ENCODE measurements at regions of chr19 and their contacts with region 1.

Region 1: GRCh38 chr19:55407800-55408532 is 378 bp upstream of the UBE2S start:
- DNase-seq: peak; percentile 98
- ATAC-seq: peak; percentile 96
- H3K4me3 Mint-ChIP-seq: peak overlapping the region; percentile 90
- H3K27ac Mint-ChIP-seq: peak overlapping the region; percentile 96
- H3K4me1 Mint-ChIP-seq: peaks cover 22% of the 10 kb centered on the region
- H3K27me3 Mint-ChIP-seq: no peaks in the 10 kb centered on the region

Region 2: DNA sequence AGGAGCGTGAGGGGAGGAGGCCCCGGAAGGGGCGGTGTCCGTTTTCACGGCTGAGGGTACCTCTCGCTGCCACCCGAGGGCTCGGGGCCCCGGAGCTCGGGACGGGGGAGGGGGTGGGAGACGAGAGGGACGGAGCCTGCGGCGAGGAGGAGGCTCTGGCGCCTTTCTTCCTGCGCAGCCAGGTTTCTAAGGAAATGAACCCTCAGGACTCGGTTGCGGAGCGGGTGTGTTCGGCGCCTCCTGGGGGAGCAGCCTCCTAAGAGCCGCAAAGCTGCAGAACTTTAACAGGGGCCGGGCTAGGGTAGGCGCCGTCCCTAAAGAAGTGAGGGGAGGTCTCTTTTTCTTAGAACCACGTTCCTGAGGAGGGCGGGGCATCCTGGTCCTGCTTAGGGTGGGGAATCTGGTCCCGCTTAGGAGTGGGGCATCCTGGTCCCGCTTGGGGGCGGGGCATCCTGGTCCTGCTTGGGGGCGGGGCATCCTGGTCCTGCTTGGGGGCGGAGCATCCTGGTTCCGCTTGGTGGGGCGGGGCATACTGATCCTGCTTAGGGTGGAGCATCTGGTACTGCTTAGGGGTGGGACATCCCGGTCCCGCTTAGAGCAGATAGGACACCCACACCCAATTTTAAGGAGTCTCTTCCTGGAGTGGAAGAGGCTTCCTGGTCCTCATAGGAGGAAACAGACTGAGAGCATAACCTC is 234.1 kb before region 1 on chr19:
- CTCF ChIA-PET with region 1: no interaction called
- POLR2A ChIA-PET with region 1: no interaction called
- intact Hi-C with region 1: no loop called
- DNase-seq: peak; percentile 72
- ATAC-seq: peak; percentile 69
- H3K4me3 Mint-ChIP-seq: peak overlapping the region; percentile 49
- H3K27ac Mint-ChIP-seq: no peak overlapping the region
- H3K4me1 Mint-ChIP-seq: peaks cover 16% of the 10 kb centered on the region
- H3K27me3 Mint-ChIP-seq: peaks cover 61% of the 10 kb centered on the region

Region 3: DNA sequence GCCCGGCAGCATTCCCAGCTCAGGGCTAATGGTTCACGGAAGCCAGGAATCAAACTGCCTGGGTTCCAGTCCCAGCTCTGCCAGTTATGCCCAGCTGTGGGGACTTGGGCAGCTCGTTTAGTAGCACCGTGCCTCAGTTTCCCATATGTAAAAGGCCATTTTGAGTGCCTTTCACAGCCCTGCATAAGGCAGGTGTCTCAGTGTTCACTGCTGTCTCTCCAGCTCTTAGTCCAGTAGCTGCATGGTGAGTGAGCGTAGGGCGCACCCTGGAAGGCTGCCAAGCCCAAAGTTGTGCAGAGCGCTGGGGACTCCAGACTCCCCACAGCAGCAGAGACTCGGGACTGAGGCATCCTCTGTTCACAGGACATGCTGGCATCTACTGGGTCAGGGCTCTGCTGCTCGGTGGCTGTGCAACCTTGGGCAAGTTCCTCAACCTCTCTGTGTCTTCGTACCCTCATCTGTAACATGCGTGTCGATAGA is 16.7 kb before region 1 on chr19:
- CTCF ChIA-PET with region 1: interaction called, 3 read pairs
- POLR2A ChIA-PET with region 1: interaction called, 41 read pairs
- intact Hi-C with region 1: no loop called
- DNase-seq: no peak
- ATAC-seq: no peak
- H3K4me3 Mint-ChIP-seq: no peak overlapping the region
- H3K27ac Mint-ChIP-seq: no peak overlapping the region
- H3K4me1 Mint-ChIP-seq: peaks cover 31% of the 10 kb centered on the region
- H3K27me3 Mint-ChIP-seq: no peaks in the 10 kb centered on the region

Region 4: GRCh38 chr19:55452749-55453346 is 44.9 kb after region 1 on chr19:
- CTCF ChIA-PET with region 1: no interaction called
- POLR2A ChIA-PET with region 1: no interaction called
- intact Hi-C with region 1: loop called in 1 of 2 experiments (anchors 5 kb)
- DNase-seq: peak; percentile 61
- ATAC-seq: peak; percentile 63
- H3K4me3 Mint-ChIP-seq: no peak overlapping the region
- H3K27ac Mint-ChIP-seq: no peak overlapping the region
- H3K4me1 Mint-ChIP-seq: peaks cover 8% of the 10 kb centered on the region
- H3K27me3 Mint-ChIP-seq: peaks cover 20% of the 10 kb centered on the region

Region 5: DNA sequence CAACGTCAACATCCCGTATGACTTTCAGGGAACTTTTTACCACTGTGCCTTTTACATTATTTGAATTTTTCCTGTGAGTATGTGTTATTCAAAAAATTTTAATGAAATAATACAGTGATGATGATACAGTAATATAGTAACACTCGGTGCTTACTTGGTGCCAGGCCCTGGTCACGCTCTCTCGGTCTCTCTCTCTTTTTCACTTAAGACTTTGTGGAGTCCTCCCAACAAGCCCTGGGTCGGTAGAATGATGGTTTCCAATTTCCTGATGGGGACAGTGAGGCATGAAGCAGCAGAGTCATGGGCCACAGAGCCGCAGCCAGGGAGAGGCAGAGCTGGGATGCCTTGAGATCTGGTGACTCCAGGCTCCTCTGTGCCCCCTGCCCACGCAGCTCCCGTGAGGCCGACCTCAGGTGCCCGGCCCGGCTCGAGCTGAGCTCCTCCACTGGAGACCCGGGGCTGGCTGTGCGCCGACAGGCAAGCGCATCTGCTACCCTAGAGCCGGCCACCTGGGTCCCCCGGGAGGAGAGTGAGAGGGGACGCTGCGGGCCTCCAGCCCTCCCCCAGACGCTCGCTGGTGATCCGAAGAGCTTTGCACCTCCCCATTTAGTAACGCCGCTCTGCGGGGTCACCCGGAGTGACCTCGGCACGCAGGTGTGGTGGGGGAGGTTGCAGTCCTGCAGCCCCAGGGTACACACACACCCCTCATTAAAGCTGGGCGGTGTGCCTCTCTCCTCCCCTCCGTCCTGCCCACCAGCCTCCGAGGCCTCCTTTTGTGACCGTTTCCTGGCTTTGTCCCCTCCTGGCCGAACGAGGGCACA is 141.7 kb after region 1 on chr19:
- CTCF ChIA-PET with region 1: no interaction called
- POLR2A ChIA-PET with region 1: no interaction called
- intact Hi-C with region 1: no loop called
- DNase-seq: no peak
- ATAC-seq: no peak
- H3K4me3 Mint-ChIP-seq: no peak overlapping the region
- H3K27ac Mint-ChIP-seq: no peak overlapping the region
- H3K4me1 Mint-ChIP-seq: no peaks in the 10 kb centered on the region
- H3K27me3 Mint-ChIP-seq: peaks cover 20% of the 10 kb centered on the region